Left colon (tissue), 2 donors: ENCODE measurements at regions of chr12 and their contacts with region 1.

Region 1: GRCh38 chr12:54220092-54220557 is 31.3 kb upstream of the SMUG1 start:
- DNase-seq: peak in 1 of 2 donors; percentile 68
- ATAC-seq: peak; percentile 62

Region 2: GRCh38 chr12:53129170-53129569 is 1091.0 kb before region 1 on chr12:
- intact Hi-C with region 1: no loop called
- DNase-seq: no peak
- ATAC-seq: no peak

Region 3: DNA sequence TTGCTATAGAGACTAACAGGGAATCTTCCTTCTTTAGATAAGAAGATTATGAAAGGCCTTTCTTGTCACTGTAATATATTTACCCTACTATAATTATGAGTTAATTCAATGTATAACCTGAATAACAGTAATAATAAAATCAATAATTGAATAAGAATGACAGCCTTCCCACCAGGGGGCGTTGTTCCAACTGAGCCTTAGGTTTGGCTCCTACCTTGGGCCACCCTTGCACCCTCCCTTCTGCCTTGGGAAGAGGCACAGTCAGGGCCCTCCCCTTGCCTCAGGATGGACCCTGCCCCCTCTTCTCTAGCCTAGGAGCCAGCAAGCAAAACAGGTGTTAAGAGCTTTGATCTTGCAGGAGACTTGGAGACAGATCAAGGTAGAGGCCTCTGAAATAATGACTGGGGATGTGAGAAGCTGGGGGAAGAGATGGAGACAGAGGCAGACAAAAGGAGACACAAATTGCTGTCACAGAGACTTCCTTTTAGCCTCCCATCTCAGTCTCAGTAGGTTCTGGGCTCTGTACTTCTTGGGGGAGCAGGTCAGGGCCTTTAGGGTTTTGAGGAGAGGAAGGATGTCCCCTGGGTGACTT is 428.3 kb before region 1 on chr12:
- intact Hi-C with region 1: no loop called
- DNase-seq: peak in 1 of 2 donors; percentile 16
- ATAC-seq: no peak

Region 4: DNA sequence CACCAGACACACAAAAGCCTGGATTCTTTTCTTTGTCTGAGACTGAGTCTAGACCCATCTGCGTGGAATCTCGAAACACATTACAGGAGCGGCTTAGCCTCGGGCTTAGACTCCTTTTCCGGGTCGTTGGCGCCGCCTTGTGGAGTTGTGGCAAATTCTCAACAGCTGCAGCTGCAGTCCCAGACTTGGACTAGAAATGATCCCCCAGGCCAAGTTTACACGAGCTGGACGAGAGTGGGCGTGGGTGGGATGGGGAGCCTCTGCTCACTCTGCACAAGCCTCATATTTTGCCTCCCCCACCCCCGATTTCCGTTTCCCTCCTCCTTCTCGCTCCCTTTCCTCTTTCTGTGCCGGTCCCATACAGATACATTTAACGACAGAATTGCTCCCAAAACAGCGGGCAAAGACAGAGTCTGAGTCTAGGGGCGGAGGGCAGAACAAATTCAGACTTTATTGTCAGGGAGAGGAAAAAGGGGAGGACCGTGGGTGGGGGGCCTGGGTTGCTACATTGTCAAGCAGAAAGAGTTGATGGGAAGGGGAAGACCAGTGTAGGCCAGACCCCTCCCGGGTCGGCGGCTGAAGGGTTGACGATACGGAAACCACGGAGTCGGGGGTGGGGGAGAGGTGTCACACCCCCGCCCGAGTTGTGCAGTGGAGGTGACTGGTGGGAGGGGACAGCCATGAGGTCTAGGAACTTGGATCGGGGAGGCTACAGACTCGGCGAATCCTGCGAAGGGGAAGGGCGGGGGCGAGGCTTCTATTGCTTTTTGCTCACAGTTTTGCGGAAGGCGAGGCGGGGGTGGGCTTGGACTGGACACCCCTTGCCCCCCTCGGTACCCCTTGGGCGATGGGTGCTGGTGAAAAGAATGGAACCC is 148.8 kb after region 1 on chr12:
- intact Hi-C with region 1: loop called in 1 of 2 experiments (anchors 10 kb)
- DNase-seq: peak; percentile 87 to 92
- ATAC-seq: peak; percentile 75